Activated CD4-positive, alpha-beta T cell treated with anti-CD3 and anti-CD28 coated beads, Interleukin-2, amount 10 ng/mL, durations not matched to agents 24 days and 14 days (primary cell): ENCODE measurements at regions of chr17 and their contacts with region 1.

Region 1: DNA sequence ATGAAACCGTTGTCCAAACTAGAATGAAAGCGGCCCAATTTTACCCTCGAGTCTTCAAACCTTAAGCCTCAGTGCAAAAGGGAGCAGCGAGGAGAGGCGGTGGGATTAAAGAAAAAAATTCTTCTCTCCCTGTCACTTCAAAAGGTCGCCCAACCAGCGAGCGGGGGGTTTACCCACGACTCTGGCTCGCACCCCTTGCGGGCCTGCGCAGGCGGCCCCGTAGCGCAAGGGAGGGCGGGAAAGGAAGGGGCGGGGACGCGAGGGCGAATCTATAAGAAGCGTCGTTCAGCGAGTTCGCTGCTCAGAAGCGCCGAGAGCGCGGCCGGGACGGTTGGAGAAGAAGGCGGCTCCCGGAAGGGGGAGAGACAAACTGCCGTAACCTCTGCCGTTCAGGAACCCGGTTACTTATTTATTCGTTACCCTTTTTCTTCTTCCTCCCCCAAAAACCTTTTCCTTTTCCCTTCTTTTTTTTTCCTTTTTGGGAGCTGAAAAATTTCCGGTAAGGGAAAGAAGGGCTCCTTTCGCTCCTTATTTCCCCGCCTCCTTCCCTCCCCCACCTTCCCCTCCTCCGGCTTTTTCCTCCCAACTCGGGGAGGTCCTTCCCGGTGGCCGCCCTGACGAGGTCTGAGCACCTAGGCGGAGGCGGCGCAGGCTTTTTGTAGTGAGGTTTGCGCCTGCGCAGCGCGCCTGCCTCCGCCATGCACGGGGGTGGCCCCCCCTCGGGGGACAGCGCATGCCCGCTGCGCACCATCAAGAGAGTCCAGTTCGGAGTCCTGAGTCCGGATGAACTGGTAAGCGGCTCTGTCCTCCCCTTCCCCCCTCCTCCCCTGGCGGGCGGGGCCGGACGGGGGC is at the start of gene POLR2A:
- DNase-seq: peak; percentile 99
- H3K4me3 Mint-ChIP-seq: peak within 1 kb of the TSS; percentile 88
- H3K27ac Mint-ChIP-seq: peak within 1 kb of the TSS; percentile 100
- H3K4me1 Mint-ChIP-seq: peaks cover 55% of the 10 kb centered on the region
- H3K27me3 Mint-ChIP-seq: no peaks in the 10 kb centered on the region
- total RNA-seq, gene POLR2A: 226 and 230 TPM in 2 replicates

Region 2: GRCh38 chr17:7351665-7352501 is 132.4 kb before region 1 on chr17 and contains the start of gene KCTD11:
- intact Hi-C with region 1: loop called (anchors 5 kb)
- DNase-seq: peak; percentile 94
- H3K4me3 Mint-ChIP-seq: peak within 1 kb of the TSS; percentile 88
- H3K27ac Mint-ChIP-seq: peak within 1 kb of the TSS; percentile 92
- H3K4me1 Mint-ChIP-seq: peaks cover 33% of the 10 kb centered on the region
- H3K27me3 Mint-ChIP-seq: no peaks in the 10 kb centered on the region
- total RNA-seq, gene KCTD11: 7.0 and 7.6 TPM in 2 replicates

Region 3: GRCh38 chr17:7403977-7404736 is 80.1 kb before region 1 on chr17 and contains the start of gene TMEM256:
- intact Hi-C with region 1: loop called (anchors 1 kb)
- DNase-seq: peak; percentile 98
- H3K4me3 Mint-ChIP-seq: peak within 1 kb of the TSS; percentile 96
- H3K27ac Mint-ChIP-seq: peak within 1 kb of the TSS; percentile 96
- H3K4me1 Mint-ChIP-seq: peaks cover 21% of the 10 kb centered on the region
- H3K27me3 Mint-ChIP-seq: peaks cover 23% of the 10 kb centered on the region
- total RNA-seq, gene TMEM256: 47.4 and 59.3 TPM in 2 replicates

Region 4: DNA sequence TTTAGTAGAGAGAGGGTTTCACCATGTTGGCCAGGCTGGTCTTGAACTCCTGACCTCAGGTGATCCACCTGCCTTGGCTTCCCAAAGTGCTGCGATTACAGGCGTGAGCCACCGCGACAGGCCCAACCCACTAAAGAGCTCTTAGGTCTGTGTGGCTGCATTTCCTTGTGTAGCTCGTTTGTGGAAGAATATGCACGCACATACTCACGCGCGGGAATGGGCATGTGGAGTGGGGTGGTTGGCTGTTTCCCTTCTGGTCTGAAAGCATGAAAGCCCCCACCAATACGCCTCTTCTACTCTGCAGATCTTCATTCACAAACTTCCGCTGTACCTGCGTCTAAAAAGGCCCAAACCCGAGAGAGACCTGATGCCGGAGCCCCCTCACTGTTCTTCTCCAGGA is 29.3 kb before region 1 on chr17:
- intact Hi-C with region 1: loop called (anchors 1 kb)
- DNase-seq: no peak
- H3K4me3 Mint-ChIP-seq: peak overlapping the region; percentile 86
- H3K27ac Mint-ChIP-seq: peak overlapping the region; percentile 87
- H3K4me1 Mint-ChIP-seq: peaks cover 22% of the 10 kb centered on the region
- H3K27me3 Mint-ChIP-seq: no peaks in the 10 kb centered on the region

Region 5: DNA sequence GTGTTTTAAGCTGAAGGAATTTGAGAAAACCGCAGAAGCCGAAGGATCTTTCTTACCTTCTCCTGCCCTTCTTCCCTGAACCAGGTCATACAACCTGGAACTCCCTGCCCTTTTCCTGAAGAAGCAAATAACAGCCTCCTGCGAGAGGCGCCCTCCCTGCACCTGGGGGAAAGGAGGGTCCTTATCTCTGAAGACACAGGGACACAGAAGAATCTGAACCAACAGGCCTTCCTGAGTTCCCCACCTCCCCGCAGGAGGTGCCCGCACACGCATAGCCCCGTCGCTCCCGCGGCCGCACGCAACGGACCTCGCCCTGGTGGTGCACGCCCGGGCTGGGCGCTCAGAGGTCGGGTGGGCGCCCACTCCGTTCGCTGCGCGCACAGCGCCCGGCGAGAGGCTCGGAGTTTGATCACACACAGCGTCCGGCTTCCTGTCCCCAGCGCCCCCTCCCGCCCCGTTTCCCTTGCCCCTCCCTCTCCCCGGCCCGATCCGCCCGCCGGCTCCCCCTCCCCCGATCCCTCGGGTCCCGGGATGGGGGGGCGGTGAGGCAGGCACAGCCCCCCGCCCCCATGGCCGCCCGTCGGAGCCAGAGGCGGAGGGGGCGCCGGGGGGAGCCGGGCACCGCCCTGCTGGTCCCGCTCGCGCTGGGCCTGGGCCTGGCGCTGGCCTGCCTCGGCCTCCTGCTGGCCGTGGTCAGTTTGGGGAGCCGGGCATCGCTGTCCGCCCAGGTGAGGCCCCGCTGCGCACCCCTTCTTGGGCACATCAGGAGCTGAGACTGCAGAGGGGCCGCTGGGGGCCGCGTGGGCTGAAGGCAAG is 64.5 kb after region 1 on chr17 and contains the start of gene TNFSF12:
- intact Hi-C with region 1: loop called (anchors 2 kb)
- DNase-seq: peak; percentile 89
- H3K4me3 Mint-ChIP-seq: peak within 1 kb of the TSS; percentile 83
- H3K27ac Mint-ChIP-seq: peak within 1 kb of the TSS; percentile 83
- H3K4me1 Mint-ChIP-seq: peaks cover 50% of the 10 kb centered on the region
- H3K27me3 Mint-ChIP-seq: no peaks in the 10 kb centered on the region
- total RNA-seq, gene TNFSF12: 21.5 and 21.8 TPM in 2 replicates

Region 6: DNA sequence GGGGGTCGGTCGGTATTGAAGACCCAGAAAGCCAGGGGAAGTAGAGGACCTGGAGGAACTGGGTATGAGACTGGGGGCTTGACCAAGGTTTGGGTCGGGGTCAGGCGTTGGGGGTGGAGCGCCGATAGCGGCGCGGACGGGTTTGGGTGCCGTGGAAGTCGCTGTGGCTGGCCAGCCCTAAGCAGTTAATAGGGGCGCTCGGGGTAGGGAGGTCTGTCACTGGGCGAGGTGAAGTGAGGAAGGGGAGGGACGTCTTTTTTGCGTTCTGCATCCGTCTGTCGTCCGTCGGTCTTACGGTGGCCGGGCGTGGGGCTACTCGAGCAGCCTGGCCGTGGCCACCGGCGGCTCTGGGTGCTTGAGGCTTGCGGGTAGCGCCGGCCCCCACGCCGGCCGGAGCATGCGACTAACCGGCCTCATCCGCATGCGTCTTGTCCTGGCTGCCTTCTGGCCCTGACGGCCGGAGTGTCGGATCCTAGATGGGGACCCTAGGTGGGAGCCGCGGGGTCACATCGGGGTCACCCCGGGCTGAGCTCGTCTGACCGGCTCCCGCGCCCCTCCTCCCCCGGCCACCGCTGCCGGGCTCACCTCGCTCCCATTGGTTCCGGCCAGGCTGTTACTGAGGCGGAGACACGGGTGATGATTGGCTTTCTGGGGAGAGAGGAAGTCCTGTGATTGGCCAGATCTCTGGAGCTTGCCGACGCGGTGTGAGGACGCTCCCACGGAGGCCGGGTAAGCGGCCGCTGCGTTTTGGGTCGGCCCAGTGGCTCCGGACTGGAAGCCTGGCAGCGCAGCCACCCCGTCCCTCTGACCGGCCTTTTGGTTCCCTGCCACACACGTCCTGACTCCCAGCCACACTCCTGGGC is 360.2 kb after region 1 on chr17:
- intact Hi-C with region 1: loop called (anchors 5 kb)
- DNase-seq: peak; percentile 96
- H3K4me3 Mint-ChIP-seq: peak overlapping the region; percentile 99
- H3K27ac Mint-ChIP-seq: peak overlapping the region; percentile 100
- H3K4me1 Mint-ChIP-seq: peaks cover 37% of the 10 kb centered on the region
- H3K27me3 Mint-ChIP-seq: peaks cover 2% of the 10 kb centered on the region